ENCODE measurements at regions of chr9 and their contacts with region 1.

Region 1: DNA sequence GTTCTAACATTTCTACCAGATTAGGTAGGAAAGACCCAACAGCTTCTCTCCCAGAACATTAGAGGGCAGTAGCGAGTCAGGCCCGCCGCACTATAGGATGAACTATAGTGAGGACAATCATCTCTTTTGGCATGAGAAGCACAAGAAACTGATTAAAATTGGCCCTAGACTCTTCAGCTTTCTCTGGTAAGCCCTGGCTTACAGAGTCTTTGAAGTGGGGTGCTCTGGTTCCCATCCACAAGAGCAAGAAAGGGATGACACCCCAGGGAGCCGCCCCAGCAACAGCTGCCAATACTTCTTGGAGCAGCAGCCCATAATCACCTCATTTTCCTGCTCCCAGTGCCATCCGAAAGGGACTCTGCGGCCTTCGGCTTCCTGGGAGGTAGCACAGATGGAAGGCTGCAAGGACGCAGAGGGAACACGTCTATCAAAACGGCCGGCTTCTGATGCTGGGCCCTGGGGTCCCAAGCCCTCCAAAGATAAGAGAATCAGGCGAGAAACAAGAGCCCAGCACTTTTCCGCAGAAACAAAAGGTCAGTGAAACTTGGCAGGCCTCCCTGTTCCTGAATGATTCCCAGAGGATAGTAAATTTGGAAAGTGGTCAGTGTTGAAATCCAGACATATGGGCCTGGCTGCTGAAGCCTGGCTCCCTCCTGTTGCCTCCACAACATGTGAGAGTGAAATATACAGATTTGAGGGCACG is 69.3 kb downstream of the HSD17B3 start:
- DNase-seq: peak; percentile 18
- H3K4me3 ChIP-seq: no peak overlapping the region
- H3K27ac ChIP-seq: no peak overlapping the region
- H3K27me3 ChIP-seq: peaks cover 13% of the 10 kb centered on the region
- CTCF ChIP-seq: peak; percentile 99

Region 2: GRCh38 chr9:96217754-96218693 is 14.7 kb before region 1 on chr9:
- CTCF ChIA-PET with region 1: interaction called, 20 read pairs
- POLR2A ChIA-PET with region 1: no interaction called
- DNase-seq: peak; percentile 11
- H3K4me3 ChIP-seq: peak overlapping the region; percentile 46
- H3K27ac ChIP-seq: no peak overlapping the region
- H3K27me3 ChIP-seq: peaks cover 34% of the 10 kb centered on the region
- CTCF ChIP-seq: peak; percentile 88

Region 3: GRCh38 chr9:96245399-96245798 is 12.7 kb after region 1 on chr9:
- CTCF ChIA-PET with region 1: interaction called, 20 read pairs
- POLR2A ChIA-PET with region 1: no interaction called
- DNase-seq: no peak
- H3K4me3 ChIP-seq: no peak overlapping the region
- H3K27ac ChIP-seq: no peak overlapping the region
- H3K27me3 ChIP-seq: peaks cover 14% of the 10 kb centered on the region
- CTCF ChIP-seq: no peak

Region 4: GRCh38 chr9:96317335-96317980 is 84.8 kb after region 1 on chr9:
- CTCF ChIA-PET with region 1: interaction called, 71 read pairs
- POLR2A ChIA-PET with region 1: interaction called, 9 read pairs
- DNase-seq: peak; percentile 32
- H3K4me3 ChIP-seq: no peak overlapping the region
- H3K27ac ChIP-seq: no peak overlapping the region
- H3K27me3 ChIP-seq: no peaks in the 10 kb centered on the region
- CTCF ChIP-seq: peak; percentile 98

Region 5: GRCh38 chr9:96464426-96464825 is 231.7 kb after region 1 on chr9:
- CTCF ChIA-PET with region 1: no interaction called
- POLR2A ChIA-PET with region 1: no interaction called
- DNase-seq: no peak
- H3K4me3 ChIP-seq: no peak overlapping the region
- H3K27ac ChIP-seq: no peak overlapping the region
- H3K27me3 ChIP-seq: no peaks in the 10 kb centered on the region
- CTCF ChIP-seq: no peak

Region 6: GRCh38 chr9:96663506-96664120 is 430.9 kb after region 1 on chr9:
- CTCF ChIA-PET with region 1: interaction called, 11 read pairs
- POLR2A ChIA-PET with region 1: no interaction called
- DNase-seq: no peak
- H3K4me3 ChIP-seq: no peak overlapping the region
- H3K27ac ChIP-seq: no peak overlapping the region
- H3K27me3 ChIP-seq: no peaks in the 10 kb centered on the region
- CTCF ChIP-seq: no peak

Measured in AG04450 (cell line).